Caco-2 (cell line): ENCODE measurements at regions of chr14 and their contacts with region 1.

Region 1: GRCh38 chr14:51865953-51866747 is 5.7 kb downstream of the GNG2 start:
- DNase-seq: peak; percentile 90 to 93
- H3K4me3 ChIP-seq: no peak overlapping the region
- H3K4me3 Mint-ChIP-seq: no peak overlapping the region
- H3K27ac Mint-ChIP-seq: no peak overlapping the region
- H3K4me1 ChIP-seq: peaks cover 37% of the 10 kb centered on the region
- H3K4me1 Mint-ChIP-seq: peaks cover 10% of the 10 kb centered on the region
- H3K27me3 ChIP-seq: no peaks in the 10 kb centered on the region
- H3K27me3 Mint-ChIP-seq: no peaks in the 10 kb centered on the region
- CTCF ChIP-seq: no peak

Region 2: DNA sequence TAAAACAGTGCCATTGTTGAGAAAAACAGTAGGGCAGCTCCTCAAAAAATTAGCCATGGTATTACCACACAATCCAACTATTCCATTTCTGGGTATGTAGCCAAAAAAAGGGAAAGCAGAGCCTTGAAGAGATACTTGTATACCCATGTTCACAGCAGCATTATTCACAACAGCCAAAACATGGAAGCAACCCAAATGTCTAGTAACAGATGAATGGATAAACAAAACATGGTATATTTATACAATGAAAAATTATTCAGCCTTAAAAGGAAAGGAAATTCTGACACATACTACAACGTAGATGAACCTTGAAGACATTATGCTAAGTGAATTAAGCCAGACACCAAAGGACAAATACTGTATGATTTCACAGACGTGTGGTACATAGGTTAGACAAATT is 73.3 kb before region 1 on chr14:
- CTCF ChIA-PET with region 1: no interaction called
- POLR2A ChIA-PET with region 1: no interaction called
- intact Hi-C with region 1: no loop called
- DNase-seq: no peak
- H3K4me3 ChIP-seq: no peak overlapping the region
- H3K4me3 Mint-ChIP-seq: no peak overlapping the region
- H3K27ac Mint-ChIP-seq: no peak overlapping the region
- H3K4me1 ChIP-seq: no peaks in the 10 kb centered on the region
- H3K4me1 Mint-ChIP-seq: no peaks in the 10 kb centered on the region
- H3K27me3 ChIP-seq: no peaks in the 10 kb centered on the region
- H3K27me3 Mint-ChIP-seq: peaks cover 6% of the 10 kb centered on the region
- CTCF ChIP-seq: no peak

Region 3: DNA sequence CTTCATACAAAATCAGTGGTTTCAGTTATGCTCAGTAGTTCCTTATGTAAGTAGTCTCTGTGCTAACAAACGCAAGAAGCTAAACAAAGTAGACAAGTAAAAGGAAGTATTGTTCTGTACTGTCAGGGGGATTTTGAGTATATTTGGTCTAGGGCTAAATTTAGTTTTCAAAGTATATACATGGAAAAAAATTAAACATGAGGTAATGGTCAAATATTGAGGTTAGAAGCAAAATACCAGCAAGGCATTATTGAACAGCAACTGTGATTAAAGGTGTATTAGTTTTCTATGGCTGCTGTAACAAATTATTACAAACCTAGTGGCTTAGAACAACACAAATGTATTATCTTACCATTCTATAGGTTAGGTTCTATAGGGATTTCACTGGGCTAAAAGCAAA is 13.0 kb after region 1 on chr14:
- CTCF ChIA-PET with region 1: no interaction called
- POLR2A ChIA-PET with region 1: no interaction called
- intact Hi-C with region 1: loop called (anchors 1 kb)
- DNase-seq: no peak
- H3K4me3 ChIP-seq: no peak overlapping the region
- H3K4me3 Mint-ChIP-seq: no peak overlapping the region
- H3K27ac Mint-ChIP-seq: no peak overlapping the region
- H3K4me1 ChIP-seq: peaks cover 34% of the 10 kb centered on the region
- H3K4me1 Mint-ChIP-seq: peaks cover 26% of the 10 kb centered on the region
- H3K27me3 ChIP-seq: no peaks in the 10 kb centered on the region
- H3K27me3 Mint-ChIP-seq: no peaks in the 10 kb centered on the region
- CTCF ChIP-seq: no peak